Calu3 (cell line): ENCODE measurements at regions of chr7 and their contacts with region 1.

Region 1: GRCh38 chr7:139230774-139231512 is at the start of gene UBN2:
- DNase-seq: peak; percentile 95
- H3K4me3 Mint-ChIP-seq: peak within 1 kb of the TSS; percentile 81
- H3K27ac Mint-ChIP-seq: peak within 1 kb of the TSS; percentile 82
- H3K4me1 Mint-ChIP-seq: peaks cover 9% of the 10 kb centered on the region
- H3K27me3 Mint-ChIP-seq: no peaks in the 10 kb centered on the region
- CTCF ChIP-seq: no peak
- total RNA-seq, gene UBN2: 19.2 and 23.0 TPM in 2 replicates

Region 2: DNA sequence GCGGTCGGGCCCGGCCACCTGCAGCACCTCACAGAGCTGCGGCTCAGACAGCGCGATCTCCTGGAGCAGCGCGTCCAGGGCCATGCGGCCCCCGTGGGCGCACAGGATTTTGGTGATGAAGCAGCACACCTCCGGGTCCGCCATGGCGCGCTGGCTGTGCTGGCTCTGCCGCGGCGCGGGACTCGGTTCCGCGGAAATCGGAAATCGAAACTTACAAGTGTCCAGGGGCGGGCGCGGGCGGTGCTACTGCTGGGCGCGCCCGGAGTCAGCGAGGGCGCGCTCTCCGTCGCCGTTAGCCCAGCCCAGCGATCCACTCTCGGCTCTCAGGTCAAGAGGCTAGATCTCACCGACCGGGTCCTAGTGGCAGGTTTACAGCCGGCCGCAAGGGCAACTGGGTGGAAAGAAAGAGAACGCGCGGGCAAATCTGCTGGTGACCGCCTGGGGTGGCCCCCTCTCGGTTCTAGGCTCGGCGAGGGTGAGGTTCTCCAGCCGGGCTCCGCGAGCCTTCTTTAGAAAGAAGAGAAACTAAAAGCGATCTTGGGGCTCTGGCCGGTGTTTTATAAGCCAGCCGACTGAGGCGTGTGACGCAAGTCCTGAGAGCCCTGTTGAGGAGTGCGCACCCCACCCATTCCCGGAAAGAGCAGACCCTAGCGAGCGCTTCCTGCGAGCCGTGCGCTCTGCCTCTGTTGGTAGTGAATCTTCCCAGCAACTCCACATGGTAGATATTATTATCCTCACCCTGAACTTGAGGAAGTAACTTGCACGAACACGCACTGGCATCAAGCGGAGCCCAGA is 121.6 kb before region 1 on chr7 and contains the start of gene ZC3HAV1:
- CTCF ChIA-PET with region 1: no interaction called
- intact Hi-C with region 1: loop called (anchors 10 kb)
- DNase-seq: peak; percentile 82
- H3K4me3 Mint-ChIP-seq: peak within 1 kb of the TSS; percentile 94
- H3K27ac Mint-ChIP-seq: peak within 1 kb of the TSS; percentile 61
- H3K4me1 Mint-ChIP-seq: peaks cover 19% of the 10 kb centered on the region
- H3K27me3 Mint-ChIP-seq: no peaks in the 10 kb centered on the region
- CTCF ChIP-seq: no peak
- total RNA-seq, gene ZC3HAV1: 63.4 and 101 TPM in 2 replicates

Region 3: GRCh38 chr7:139203992-139204391 is 27.0 kb before region 1 on chr7:
- CTCF ChIA-PET with region 1: no interaction called
- intact Hi-C with region 1: no loop called
- DNase-seq: no peak
- H3K4me3 Mint-ChIP-seq: no peak overlapping the region
- H3K27ac Mint-ChIP-seq: no peak overlapping the region
- H3K4me1 Mint-ChIP-seq: no peaks in the 10 kb centered on the region
- H3K27me3 Mint-ChIP-seq: no peaks in the 10 kb centered on the region
- CTCF ChIP-seq: no peak

Region 4: DNA sequence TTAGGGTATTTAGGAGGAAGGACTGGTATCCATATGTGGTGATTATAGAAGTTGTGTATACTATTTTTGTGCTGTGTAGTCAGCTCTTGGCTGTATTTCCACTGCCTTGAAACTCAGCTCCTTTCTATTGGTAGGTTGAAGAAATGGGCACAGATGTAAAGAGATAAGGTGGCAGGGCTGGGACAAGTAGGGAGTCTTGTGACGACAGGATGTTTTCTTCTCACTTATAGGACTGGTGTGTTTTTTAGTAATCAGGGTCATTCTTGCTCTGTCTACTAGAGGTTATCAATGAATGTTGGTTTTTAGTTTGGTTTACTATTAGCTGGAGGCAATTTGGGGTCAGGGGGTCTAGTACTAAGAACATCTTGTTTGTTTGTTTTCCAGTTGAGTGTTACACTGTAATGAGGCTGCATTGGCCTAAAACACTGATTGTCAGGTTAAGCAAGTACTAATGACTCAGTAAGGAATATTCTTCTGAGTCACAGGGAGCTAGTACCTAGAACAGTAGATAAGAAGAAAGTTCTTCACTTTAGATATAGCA is 11.9 kb after region 1 on chr7:
- CTCF ChIA-PET with region 1: interaction called, 10 read pairs
- intact Hi-C with region 1: no loop called
- DNase-seq: no peak
- H3K4me3 Mint-ChIP-seq: no peak overlapping the region
- H3K27ac Mint-ChIP-seq: peak overlapping the region; percentile 71
- H3K4me1 Mint-ChIP-seq: peaks cover 10% of the 10 kb centered on the region
- H3K27me3 Mint-ChIP-seq: no peaks in the 10 kb centered on the region
- CTCF ChIP-seq: no peak